Ascending aorta (tissue), 2 donors: ENCODE measurements at regions of chr4 and their contacts with region 1.

Region 1: DNA sequence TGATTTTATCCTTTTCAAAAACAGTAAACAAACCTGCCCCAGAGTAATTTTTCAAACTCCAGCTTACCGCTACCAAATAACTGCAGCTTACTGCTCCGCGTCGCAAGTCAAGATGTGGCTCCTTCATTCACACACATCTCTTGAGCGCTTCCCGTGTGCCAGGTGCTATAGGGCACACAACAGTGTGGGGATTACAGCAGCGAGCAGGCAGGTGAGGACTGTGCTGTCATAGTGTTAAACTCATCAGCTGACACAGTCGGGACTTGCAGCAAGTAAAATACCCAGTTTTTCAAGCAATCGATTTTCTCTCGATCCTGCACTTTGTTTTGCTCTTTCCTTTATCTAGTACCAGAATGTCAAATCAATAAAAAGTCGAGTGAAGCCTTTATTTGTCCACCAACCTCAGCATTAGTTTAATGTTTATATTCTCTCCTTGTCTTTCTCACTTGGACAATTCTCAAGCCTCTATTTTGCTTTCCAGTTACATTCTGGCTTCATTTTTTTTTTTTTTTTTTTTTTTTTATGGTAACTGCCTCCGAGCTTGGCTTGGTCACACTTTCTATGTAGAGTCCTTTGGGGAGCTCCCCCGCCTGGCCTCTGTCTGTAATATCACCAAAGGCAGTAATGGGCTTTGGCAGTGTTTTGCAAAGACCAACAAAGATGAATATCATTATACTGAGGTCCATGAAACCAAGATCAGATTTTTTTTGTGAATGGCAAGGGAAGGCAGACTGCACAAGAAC is 8.3 kb upstream of the ASB5 start:
- DNase-seq: peak in 1 of 2 donors; percentile 68
- H3K4me3 ChIP-seq: peak overlapping the region in 1 of 2 donors; percentile 16
- H3K27ac ChIP-seq: no peak overlapping the region
- H3K4me1 ChIP-seq: no peaks in the 10 kb centered on the region
- H3K27me3 ChIP-seq: no peaks in the 10 kb centered on the region
- CTCF ChIP-seq: peak in 2 of 3 experiments; percentile 42 to 53

Region 2: DNA sequence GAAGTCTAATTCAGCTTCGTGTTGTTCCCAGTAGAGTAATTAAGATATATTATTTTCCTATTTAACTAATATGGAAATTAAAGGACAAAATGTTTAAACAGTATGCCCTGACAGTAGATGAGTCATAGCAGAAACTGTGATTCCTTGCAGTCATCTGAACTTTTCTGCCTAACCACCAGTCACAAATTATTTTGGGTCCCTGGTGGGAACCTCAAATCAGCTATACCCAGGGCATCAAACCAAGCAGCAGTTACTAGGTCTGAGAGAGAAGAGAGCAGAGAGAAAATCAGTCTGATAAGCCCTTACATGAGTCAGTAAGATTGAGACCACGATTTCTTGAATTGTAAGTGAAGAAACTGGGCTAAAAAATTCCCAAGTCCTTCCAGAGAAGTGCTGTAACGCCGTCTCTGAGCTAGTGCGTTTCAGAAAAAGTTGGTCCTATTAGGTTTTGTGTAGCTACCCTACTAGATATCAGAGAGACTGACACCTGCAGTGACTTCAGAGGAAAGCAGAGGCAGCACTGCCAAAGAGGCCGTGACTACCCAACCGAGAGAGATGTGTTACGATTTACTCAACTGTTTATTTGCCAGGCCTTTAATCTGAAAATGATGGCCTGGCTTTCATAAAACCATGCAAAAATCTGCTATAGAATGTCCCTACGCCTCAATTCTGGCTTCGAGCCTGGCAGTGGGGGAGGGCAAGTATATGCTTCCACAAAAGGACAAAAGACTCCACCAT is 443.6 kb before region 1 on chr4:
- intact Hi-C with region 1: no loop called
- DNase-seq: no peak
- H3K4me3 ChIP-seq: no peak overlapping the region
- H3K27ac ChIP-seq: no peak overlapping the region
- H3K4me1 ChIP-seq: no peaks in the 10 kb centered on the region
- H3K27me3 ChIP-seq: no peaks in the 10 kb centered on the region
- CTCF ChIP-seq: no peak

Region 3: GRCh38 chr4:176034499-176034898 is 242.8 kb before region 1 on chr4:
- intact Hi-C with region 1: loop called (anchors 2 kb)
- DNase-seq: no peak
- H3K4me3 ChIP-seq: no peak overlapping the region
- H3K27ac ChIP-seq: no peak overlapping the region
- H3K4me1 ChIP-seq: no peaks in the 10 kb centered on the region
- H3K27me3 ChIP-seq: no peaks in the 10 kb centered on the region
- CTCF ChIP-seq: peak; percentile 12 to 53 (median 35)

Region 4: DNA sequence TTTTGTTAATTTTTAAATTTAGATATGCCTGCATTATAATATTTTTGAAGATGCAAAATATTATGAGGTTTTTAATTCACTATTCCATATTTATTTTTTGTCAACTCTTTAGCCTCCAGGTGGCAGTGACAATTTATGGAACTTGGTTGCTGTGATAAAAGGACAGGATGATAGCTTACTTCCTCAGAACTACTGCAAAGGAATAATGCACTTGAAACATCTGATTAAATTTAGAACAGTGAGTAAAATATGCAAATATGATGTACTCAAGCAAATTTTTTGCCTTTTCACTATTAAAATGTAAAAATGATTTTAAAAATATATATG is 127.0 kb before region 1 on chr4:
- intact Hi-C with region 1: loop called (anchors 1 kb)
- DNase-seq: no peak
- H3K4me3 ChIP-seq: no peak overlapping the region
- H3K27ac ChIP-seq: no peak overlapping the region
- H3K4me1 ChIP-seq: no peaks in the 10 kb centered on the region
- H3K27me3 ChIP-seq: no peaks in the 10 kb centered on the region
- CTCF ChIP-seq: peak in 1 of 3 experiments; percentile 54